ENCODE measurements at regions of chrX and their contacts with region 1.

Region 1: DNA sequence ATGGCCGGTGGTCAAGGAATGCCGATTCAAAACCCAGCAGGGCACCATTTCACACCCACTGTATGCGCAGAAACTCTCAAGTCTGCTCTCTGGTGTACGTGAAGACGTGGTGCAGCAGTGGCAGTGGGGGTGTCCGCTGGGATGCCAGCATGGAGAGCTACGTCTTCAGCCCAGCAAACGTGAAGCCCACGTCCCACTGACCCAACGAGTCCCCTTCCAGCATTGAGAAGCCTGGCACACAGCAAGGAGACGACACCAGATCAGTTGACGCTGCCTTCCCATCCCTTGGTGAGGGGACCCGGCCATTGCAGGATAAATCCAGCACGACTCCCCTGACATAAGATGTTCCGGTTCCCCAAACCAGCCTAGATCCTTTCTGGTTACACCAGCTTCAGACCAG is 2.2 kb upstream of the PLXNB3 start:
- DNase-seq: peak; percentile 50
- H3K4me3 ChIP-seq: no peak overlapping the region
- H3K27ac ChIP-seq: no peak overlapping the region
- H3K4me1 ChIP-seq: peaks cover 0 to 26% (median 16%) of the 10 kb centered on the region in 6 donors
- H3K27me3 ChIP-seq: peaks cover 0 to 11% (median 0%) of the 10 kb centered on the region in 7 donors
- CTCF ChIP-seq: no peak
- POLR2A ChIP-seq: no peak

Region 2: DNA sequence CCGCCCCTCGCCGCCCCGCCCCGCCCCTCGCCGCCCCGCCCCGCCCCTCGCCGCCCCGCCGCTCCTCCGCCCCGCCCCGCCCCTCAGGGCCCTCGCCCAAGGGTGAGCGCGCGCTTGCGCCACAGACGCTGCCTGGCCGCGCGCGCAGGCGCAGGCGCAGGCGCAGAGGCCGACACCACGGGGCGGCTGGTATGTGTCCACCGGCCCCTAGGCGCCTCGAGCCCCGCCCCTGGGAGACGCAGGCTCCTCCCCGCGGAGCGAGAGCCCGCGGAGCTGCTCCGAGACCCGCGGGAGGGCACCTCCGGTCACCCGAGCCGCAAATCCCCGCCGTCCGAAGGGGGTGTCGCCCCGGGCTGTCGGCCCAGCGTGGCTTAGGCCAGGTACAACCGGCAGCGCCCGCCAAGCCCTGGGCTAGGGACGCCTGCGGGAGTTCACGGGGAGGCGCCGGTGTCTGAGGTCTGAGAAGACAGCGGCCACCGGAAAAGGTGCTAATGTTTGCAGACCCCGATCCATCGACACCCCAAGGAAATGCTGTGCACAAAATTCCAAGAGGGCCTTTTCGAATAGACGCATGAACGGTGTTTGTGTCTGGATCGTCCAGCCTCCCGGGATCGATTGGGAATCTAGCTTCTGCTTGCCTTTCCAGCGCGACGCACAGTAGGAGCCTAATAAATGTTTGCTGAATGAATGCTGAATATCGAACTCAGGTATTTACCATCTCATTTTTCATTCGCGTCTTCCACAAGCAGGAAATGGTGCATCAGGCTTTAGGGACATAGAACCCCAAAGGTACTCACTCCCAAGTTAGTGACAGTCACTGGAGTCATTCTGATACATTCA is 162.5 kb before region 1 on chrX:
- intact Hi-C with region 1: no loop called
- DNase-seq: peak; percentile 97
- H3K4me3 ChIP-seq: peak overlapping the region; percentile 39 to 94 (median 55)
- H3K27ac ChIP-seq: peak overlapping the region in 6 of 8 donors; percentile 63 to 84 (median 79)
- H3K4me1 ChIP-seq: peaks cover 6 to 48% (median 35%) of the 10 kb centered on the region in 6 donors
- H3K27me3 ChIP-seq: peaks cover 0 to 2% (median 0%) of the 10 kb centered on the region in 7 donors
- CTCF ChIP-seq: peak in 2 of 11 experiments; percentile 6 to 17
- POLR2A ChIP-seq: no peak

Region 3: DNA sequence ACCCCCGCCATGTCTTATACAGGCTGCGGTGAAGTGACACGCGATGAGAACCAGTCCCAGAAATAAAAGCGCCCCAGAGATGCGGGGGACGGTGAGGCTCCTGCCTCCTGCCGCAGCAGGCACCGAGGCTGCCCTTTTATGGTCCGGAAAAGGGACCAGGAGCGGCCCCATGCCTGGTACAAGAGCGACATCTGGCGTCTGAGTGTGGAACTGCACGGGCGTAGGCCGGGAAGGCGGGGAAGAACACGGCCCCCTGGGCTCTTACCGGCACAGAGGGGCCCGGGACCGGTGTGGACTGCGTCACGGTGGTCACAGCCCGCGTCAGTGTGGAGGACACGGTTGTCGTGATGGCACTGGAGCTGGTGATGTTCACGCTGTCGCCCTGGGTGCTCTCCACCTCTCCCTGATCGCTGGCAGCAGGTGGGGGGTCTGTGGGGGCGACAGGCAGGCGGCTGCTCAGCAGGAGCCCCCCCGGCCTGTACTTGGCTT is 191.5 kb after region 1 on chrX:
- intact Hi-C with region 1: loop called (anchors 2 kb)
- DNase-seq: peak; percentile 94
- H3K4me3 ChIP-seq: no peak overlapping the region
- H3K27ac ChIP-seq: peak overlapping the region in 3 of 8 donors; percentile 18 to 48 (median 45)
- H3K4me1 ChIP-seq: peaks cover 0 to 29% (median 19%) of the 10 kb centered on the region in 6 donors
- H3K27me3 ChIP-seq: peaks cover 0 to 3% (median 0%) of the 10 kb centered on the region in 7 donors
- CTCF ChIP-seq: peak; percentile 94 to 100 (median 97)
- POLR2A ChIP-seq: no peak

Measured in spleen (tissue), 13 donors.